ENCODE measurements at regions of chr13 and their contacts with region 1.

Region 1: GRCh38 chr13:20559659-20560356 is 7.1 kb upstream of the IFT88 start:
- DNase-seq: no peak
- ATAC-seq: no peak

Region 2: GRCh38 chr13:20525690-20526544 is 33.9 kb before region 1 on chr13 and contains the start of gene CRYL1:
- intact Hi-C with region 1: loop called (anchors 5 kb)
- DNase-seq: peak; percentile 88
- ATAC-seq: peak; percentile 99
- total RNA-seq, gene CRYL1: 18.0 TPM

Measured in Right ventricle myocardium superior (tissue), 1 donor.